Activated CD4-positive, alpha-beta T cell treated with anti-CD3 and anti-CD28 coated beads for 36 hours (primary cell): ENCODE measurements at regions of chr1 and their contacts with region 1.

Region 1: DNA sequence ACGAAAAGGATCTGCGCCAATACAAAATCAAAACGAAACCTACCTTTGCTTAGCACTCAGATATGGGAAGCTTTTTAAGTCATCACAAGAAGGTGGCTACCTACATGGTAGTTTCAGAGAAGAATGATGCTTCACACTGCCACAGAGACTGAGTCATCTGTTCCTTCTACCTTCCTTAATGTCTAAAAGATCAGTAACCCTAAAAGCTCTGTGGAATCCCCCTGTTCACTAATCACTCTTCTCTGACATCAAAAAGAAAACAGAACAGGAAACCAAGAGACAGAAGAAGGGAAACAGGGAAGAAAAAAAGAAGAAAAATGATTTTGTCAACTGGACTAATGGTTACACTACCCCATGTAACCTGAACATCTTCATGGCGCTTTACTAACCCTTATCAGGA is 177.2 kb downstream of the SMYD3 start:
- DNase-seq: peak; percentile 60
- ATAC-seq: peak; percentile 92
- H3K4me3 Mint-ChIP-seq: peak overlapping the region; percentile 3
- H3K27ac Mint-ChIP-seq: peak overlapping the region; percentile 63
- H3K4me1 Mint-ChIP-seq: peaks cover 51% of the 10 kb centered on the region
- H3K27me3 Mint-ChIP-seq: no peaks in the 10 kb centered on the region

Region 2: GRCh38 chr1:245953876-245954660 is 375.8 kb before region 1 on chr1:
- CTCF ChIA-PET with region 1: no interaction called
- POLR2A ChIA-PET with region 1: no interaction called
- intact Hi-C with region 1: loop called in 1 of 2 experiments (anchors 2 kb)
- DNase-seq: no peak
- ATAC-seq: peak; percentile 43
- H3K4me3 Mint-ChIP-seq: peak overlapping the region; percentile 54
- H3K27ac Mint-ChIP-seq: peak overlapping the region; percentile 88
- H3K4me1 Mint-ChIP-seq: peaks cover 25% of the 10 kb centered on the region
- H3K27me3 Mint-ChIP-seq: no peaks in the 10 kb centered on the region

Region 3: DNA sequence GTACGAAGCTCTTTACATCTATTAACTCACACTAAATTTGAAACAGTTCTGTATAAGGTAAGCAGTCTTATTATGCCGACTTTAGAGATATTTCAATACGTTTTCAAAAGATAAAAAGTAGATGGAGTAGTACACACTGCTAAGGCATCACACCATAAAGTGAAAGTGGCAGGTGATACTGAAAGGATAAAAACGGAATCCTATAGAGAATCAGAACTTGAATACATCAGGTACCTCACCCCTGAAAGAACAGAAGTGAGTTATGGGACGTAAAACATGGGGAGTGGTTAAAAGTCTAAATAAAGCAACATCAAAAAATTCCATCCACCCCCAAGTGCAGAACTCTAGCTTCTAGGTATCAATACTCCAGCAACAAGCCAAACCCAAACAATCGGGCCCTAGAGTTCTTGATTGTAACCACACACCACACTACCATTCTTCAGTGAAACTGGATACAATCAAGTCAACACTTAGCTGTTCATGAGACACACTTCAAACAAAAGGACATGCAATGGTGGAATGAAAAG is 34.6 kb after region 1 on chr1:
- CTCF ChIA-PET with region 1: no interaction called
- POLR2A ChIA-PET with region 1: interaction called, 4 read pairs
- intact Hi-C with region 1: loop called in 1 of 2 experiments (anchors 1 kb)
- DNase-seq: peak; percentile 26
- ATAC-seq: peak; percentile 84
- H3K4me3 Mint-ChIP-seq: peak overlapping the region; percentile 23
- H3K27ac Mint-ChIP-seq: peak overlapping the region; percentile 31
- H3K4me1 Mint-ChIP-seq: peaks cover 20% of the 10 kb centered on the region
- H3K27me3 Mint-ChIP-seq: no peaks in the 10 kb centered on the region

Region 4: GRCh38 chr1:246383791-246384190 is 53.9 kb after region 1 on chr1:
- CTCF ChIA-PET with region 1: no interaction called
- POLR2A ChIA-PET with region 1: no interaction called
- intact Hi-C with region 1: no loop called
- DNase-seq: no peak
- ATAC-seq: no peak
- H3K4me3 Mint-ChIP-seq: no peak overlapping the region
- H3K27ac Mint-ChIP-seq: no peak overlapping the region
- H3K4me1 Mint-ChIP-seq: peaks cover 14% of the 10 kb centered on the region
- H3K27me3 Mint-ChIP-seq: no peaks in the 10 kb centered on the region

Region 5: DNA sequence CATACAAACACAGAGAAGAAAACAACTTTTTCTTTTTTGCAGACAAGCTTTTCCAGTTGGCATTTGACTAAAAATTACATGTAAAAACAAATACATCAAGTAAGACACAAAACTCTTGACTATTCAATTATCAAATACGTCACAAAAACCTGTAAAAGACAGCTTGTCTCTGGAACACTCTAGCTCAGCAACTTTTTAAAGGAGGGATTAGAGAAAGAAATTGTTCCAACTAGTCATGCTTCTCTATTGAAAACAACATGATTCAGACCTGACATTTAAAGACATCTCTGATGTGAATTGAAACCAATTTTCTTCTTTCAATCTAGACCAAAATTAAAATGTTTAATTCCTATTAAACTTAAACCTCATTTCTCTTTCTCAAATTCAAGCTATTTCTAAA is 146.9 kb after region 1 on chr1:
- CTCF ChIA-PET with region 1: interaction called, 4 read pairs
- POLR2A ChIA-PET with region 1: no interaction called
- intact Hi-C with region 1: loop called (anchors 2 to 10 kb)
- DNase-seq: no peak
- ATAC-seq: peak; percentile 90
- H3K4me3 Mint-ChIP-seq: no peak overlapping the region
- H3K27ac Mint-ChIP-seq: no peak overlapping the region
- H3K4me1 Mint-ChIP-seq: peaks cover 23% of the 10 kb centered on the region
- H3K27me3 Mint-ChIP-seq: no peaks in the 10 kb centered on the region

Region 6: DNA sequence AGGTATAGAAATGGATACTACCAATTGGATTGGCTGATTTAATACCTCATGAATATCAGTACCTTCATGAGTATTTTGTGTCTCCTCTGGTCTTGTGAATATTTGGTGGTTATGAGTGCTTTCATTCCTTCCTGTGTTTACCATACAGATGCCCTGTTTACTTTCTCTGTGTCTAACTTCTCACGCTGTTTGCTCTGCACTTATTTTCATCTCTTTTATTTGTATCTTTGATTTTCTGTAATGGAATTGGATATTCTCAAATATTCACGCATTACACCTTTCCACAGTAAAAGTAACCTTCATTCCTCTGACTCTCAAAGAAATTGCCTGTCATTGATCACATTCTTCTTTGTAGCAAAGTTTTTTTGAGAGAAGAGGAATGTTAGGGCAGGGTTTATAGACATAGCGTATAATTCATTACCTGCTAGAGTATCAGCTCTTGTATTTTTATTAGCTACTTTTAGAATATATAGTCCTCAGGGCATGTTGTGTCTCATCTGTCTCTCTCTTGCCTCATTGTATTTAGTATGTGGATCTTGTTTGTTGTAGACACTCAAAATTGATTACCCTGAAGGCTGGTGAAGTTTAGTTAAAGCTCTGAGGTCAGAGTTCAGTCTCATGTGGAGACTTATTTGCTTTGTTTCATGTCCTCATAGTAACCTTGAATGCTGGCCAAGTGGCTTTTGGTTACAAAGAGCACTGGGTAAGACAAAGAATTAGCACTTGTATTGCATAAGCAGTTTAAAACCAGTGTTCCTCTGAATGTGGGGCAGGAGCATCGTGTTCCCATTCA is 253.4 kb after region 1 on chr1:
- CTCF ChIA-PET with region 1: no interaction called
- POLR2A ChIA-PET with region 1: no interaction called
- intact Hi-C with region 1: no loop called
- DNase-seq: no peak
- ATAC-seq: no peak
- H3K4me3 Mint-ChIP-seq: no peak overlapping the region
- H3K27ac Mint-ChIP-seq: peak overlapping the region; percentile 24
- H3K4me1 Mint-ChIP-seq: peaks cover 65% of the 10 kb centered on the region
- H3K27me3 Mint-ChIP-seq: no peaks in the 10 kb centered on the region

Region 7: DNA sequence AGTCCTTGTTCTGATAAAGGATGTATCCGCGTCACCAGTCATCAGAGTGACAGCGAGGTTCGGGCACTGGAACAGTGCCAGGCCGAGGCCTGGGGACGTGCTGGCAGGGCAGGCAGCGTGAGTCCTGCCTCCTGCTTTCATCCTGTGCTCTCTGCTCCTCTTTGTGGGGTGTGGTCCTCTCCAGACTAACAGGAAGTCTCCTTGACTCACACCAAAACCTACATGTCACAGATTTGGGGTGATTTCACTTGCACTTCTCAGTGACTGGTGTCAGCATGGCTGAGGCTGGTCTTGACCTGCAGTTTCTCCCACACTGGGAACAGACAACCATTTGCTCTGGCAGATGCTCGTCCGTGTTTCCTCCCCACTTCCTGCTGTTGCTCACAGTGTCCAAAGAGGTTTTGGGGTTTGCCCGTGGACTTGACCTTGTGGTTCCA is 1077.3 kb after region 1 on chr1:
- CTCF ChIA-PET with region 1: no interaction called
- POLR2A ChIA-PET with region 1: no interaction called
- intact Hi-C with region 1: loop called in 1 of 2 experiments (anchors 5 kb)
- DNase-seq: peak; percentile 84
- ATAC-seq: peak; percentile 85
- H3K4me3 Mint-ChIP-seq: peak overlapping the region; percentile 24
- H3K27ac Mint-ChIP-seq: peak overlapping the region; percentile 72
- H3K4me1 Mint-ChIP-seq: peaks cover 41% of the 10 kb centered on the region
- H3K27me3 Mint-ChIP-seq: peaks cover 2% of the 10 kb centered on the region